MCF 10A (cell line): ENCODE measurements at regions of chr12 and their contacts with region 1.

Region 1: DNA sequence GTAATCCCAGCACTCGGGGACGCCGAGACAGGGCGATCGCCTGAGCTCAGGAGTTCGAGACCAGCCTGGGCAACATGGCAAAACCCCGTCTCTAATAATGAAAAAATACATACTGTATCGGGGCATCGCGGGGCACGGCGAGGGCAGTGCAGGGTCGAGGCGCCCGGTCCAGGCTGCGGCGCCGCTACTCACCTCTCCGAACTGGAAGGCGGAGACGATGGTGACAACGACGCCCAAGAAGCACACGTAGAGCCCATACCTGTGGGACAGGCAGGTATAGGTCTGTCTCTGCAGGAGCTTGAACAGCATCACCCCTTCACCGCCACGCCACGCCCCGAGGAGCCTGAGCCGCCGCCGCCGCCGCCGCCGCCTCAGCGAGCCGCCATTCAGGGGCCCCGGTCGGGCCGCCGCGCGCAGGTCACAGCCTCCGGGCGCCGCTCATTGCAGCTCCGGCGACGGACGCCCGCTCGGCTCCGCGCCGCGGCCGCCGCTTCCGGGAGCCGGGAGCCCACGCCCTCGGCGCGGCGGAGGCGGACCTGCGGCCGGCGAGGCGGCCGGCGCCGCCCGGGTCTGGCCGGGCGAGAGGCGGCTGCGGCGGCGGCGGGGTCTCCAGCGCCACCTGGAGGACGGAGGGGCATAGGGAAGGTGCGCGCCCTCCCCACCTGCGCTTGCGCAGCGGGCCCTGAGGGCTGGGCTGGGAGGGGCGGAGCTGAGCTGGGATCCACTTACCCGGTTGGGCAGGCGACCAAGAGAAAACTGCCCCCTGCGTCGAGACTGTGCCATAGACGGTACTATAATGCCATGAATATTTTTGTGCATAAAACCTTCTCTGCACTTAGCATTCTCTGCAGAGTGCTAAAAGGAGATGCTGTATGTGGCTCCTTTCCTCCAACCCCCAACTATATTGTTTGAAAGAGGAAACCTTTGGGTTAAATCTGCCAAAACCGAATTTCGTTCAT is at the start of gene GNPTAB:
- DNase-seq: peak; percentile 94
- H3K4me3 Mint-ChIP-seq: peak within 1 kb of the TSS; percentile 84
- H3K27ac Mint-ChIP-seq: peak within 1 kb of the TSS; percentile 70
- H3K4me1 Mint-ChIP-seq: peaks cover 11% of the 10 kb centered on the region
- H3K27me3 Mint-ChIP-seq: no peaks in the 10 kb centered on the region
- CTCF ChIP-seq: peak; percentile 65
- total RNA-seq, gene GNPTAB: 11.5 and 14.8 TPM in 2 replicates

Region 2: GRCh38 chr12:101298426-101298825 is 532.2 kb before region 1 on chr12:
- CTCF ChIA-PET with region 1: no interaction called
- POLR2A ChIA-PET with region 1: no interaction called
- intact Hi-C with region 1: no loop called
- DNase-seq: peak; percentile 68
- H3K4me3 Mint-ChIP-seq: no peak overlapping the region
- H3K27ac Mint-ChIP-seq: peak overlapping the region; percentile 11
- H3K4me1 Mint-ChIP-seq: peaks cover 8% of the 10 kb centered on the region
- H3K27me3 Mint-ChIP-seq: no peaks in the 10 kb centered on the region
- CTCF ChIP-seq: no peak

Region 3: GRCh38 chr12:101407436-101408345 is 423.0 kb before region 1 on chr12 and contains the start of gene ARL1:
- CTCF ChIA-PET with region 1: interaction called, 12 read pairs
- POLR2A ChIA-PET with region 1: interaction called, 20 read pairs
- intact Hi-C with region 1: no loop called
- DNase-seq: peak; percentile 85
- H3K4me3 Mint-ChIP-seq: peak within 1 kb of the TSS; percentile 85
- H3K27ac Mint-ChIP-seq: peak within 1 kb of the TSS; percentile 96
- H3K4me1 Mint-ChIP-seq: peaks cover 10% of the 10 kb centered on the region
- H3K27me3 Mint-ChIP-seq: no peaks in the 10 kb centered on the region
- CTCF ChIP-seq: no peak
- total RNA-seq, gene ARL1: 112 and 175 TPM in 2 replicates

Region 4: GRCh38 chr12:101414533-101415119 is 416.0 kb before region 1 on chr12:
- CTCF ChIA-PET with region 1: interaction called, 12 read pairs
- POLR2A ChIA-PET with region 1: no interaction called
- intact Hi-C with region 1: loop called (anchors 2 kb)
- DNase-seq: peak; percentile 77
- H3K4me3 Mint-ChIP-seq: no peak overlapping the region
- H3K27ac Mint-ChIP-seq: no peak overlapping the region
- H3K4me1 Mint-ChIP-seq: no peaks in the 10 kb centered on the region
- H3K27me3 Mint-ChIP-seq: no peaks in the 10 kb centered on the region
- CTCF ChIP-seq: peak; percentile 46

Region 5: DNA sequence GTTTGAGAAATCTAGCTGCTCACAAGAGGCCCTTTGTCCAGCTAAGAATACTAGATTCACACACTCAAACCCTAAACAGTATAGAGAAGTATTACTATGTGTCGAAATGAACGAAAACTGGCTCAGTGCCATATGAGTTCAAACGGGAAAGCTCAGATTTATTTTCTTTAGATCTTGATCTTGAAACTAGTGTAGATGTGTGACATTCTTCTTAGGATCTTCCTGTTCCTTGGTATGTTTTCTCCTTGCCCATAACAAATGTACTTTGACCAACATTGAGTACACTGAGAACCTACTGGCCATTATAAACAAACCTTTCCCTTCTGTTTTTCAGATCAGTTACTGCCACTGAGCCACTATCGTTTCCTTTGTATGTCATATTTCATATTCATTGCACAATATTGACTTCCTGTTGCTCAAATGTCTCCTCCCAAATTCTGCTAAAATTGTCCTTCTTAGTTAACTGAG is 214.6 kb before region 1 on chr12:
- CTCF ChIA-PET with region 1: no interaction called
- POLR2A ChIA-PET with region 1: no interaction called
- intact Hi-C with region 1: no loop called
- DNase-seq: peak; percentile 74
- H3K4me3 Mint-ChIP-seq: peak overlapping the region; percentile 41
- H3K27ac Mint-ChIP-seq: peak overlapping the region; percentile 55
- H3K4me1 Mint-ChIP-seq: peaks cover 31% of the 10 kb centered on the region
- H3K27me3 Mint-ChIP-seq: no peaks in the 10 kb centered on the region
- CTCF ChIP-seq: no peak

Region 6: DNA sequence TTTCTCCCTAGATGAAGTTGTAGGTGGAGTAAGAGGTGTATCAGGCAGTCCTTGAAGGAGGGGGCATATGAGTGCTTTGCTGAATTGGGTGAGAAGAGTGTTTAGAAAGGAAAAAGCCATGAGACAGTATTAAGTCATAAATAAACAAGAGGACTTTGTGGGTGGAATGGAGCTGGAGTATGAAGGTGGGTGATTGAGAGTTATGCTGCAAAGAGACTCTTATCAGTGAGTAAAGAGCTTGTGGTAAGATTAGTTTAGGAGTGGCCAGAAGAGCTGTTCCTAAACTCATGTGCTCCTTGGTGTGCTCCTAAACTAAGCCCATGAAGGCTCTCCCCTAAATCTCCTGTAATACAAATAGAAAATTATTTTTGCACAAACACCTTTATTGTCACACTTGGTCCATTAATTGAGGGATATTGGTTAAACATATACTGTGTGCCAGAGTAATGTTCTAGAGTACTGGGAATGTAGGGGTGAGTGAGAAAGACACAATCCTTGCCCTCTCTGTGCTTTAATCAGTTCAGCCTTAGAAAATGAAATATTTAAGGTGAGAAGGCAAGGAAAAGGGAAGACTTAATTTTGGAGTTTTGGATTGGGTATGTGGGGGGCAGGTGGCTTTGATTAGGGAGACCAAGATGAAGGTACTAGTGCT is 123.4 kb before region 1 on chr12:
- CTCF ChIA-PET with region 1: no interaction called
- POLR2A ChIA-PET with region 1: no interaction called
- intact Hi-C with region 1: no loop called
- DNase-seq: no peak
- H3K4me3 Mint-ChIP-seq: no peak overlapping the region
- H3K27ac Mint-ChIP-seq: peak overlapping the region; percentile 25
- H3K4me1 Mint-ChIP-seq: peaks cover 18% of the 10 kb centered on the region
- H3K27me3 Mint-ChIP-seq: no peaks in the 10 kb centered on the region
- CTCF ChIP-seq: no peak

Region 7: DNA sequence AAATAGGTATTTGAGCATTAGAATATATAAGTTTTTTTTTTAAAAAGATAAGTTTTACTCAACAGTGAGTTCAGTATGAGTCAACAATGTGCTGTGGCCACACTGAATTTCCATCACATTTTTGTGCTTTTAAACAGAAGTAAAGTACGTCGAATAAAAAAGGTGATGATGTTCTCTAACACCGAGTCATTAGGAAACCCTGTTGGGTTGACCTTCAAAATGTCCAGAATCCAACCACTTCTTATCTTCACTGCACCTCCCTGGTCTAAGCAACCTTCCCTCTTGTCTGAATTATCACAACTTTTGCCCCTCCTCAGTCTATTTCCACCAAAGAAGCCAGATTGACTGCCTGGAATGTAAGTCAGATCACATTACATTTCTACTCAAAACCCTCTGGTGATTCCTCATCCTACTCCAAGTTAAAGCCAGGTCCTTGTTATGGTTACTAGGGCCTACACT is 48.3 kb before region 1 on chr12:
- CTCF ChIA-PET with region 1: interaction called, 19 read pairs
- POLR2A ChIA-PET with region 1: interaction called, 5 read pairs
- intact Hi-C with region 1: no loop called
- DNase-seq: no peak
- H3K4me3 Mint-ChIP-seq: no peak overlapping the region
- H3K27ac Mint-ChIP-seq: no peak overlapping the region
- H3K4me1 Mint-ChIP-seq: no peaks in the 10 kb centered on the region
- H3K27me3 Mint-ChIP-seq: no peaks in the 10 kb centered on the region
- CTCF ChIP-seq: no peak

Region 8: GRCh38 chr12:101792051-101792931 is 38.4 kb before region 1 on chr12:
- CTCF ChIA-PET with region 1: interaction called, 61 read pairs
- POLR2A ChIA-PET with region 1: interaction called, 6 read pairs
- intact Hi-C with region 1: loop called (anchors 2 kb)
- DNase-seq: peak; percentile 4
- H3K4me3 Mint-ChIP-seq: no peak overlapping the region
- H3K27ac Mint-ChIP-seq: no peak overlapping the region
- H3K4me1 Mint-ChIP-seq: no peaks in the 10 kb centered on the region
- H3K27me3 Mint-ChIP-seq: no peaks in the 10 kb centered on the region
- CTCF ChIP-seq: no peak

Region 9: DNA sequence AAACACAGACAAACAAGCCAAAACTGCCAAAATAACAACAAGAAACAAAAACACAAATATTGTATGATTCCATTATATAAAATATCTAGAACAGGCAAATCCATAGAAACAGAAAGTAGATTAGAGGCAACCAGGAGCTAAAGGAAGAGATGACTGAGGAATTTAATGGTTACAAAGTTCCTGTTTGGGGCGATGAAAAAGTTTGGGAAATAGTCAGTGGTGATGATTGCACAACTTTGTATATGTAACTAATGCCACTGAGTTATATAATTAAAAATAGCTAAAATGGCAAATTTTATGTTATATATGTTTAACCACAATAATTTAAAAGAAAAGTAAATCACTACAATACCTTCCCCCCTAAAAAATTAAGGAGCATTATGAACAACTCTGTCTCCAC is 24.4 kb before region 1 on chr12:
- CTCF ChIA-PET with region 1: interaction called, 10 read pairs
- POLR2A ChIA-PET with region 1: interaction called, 3 read pairs
- intact Hi-C with region 1: no loop called
- DNase-seq: no peak
- H3K4me3 Mint-ChIP-seq: no peak overlapping the region
- H3K27ac Mint-ChIP-seq: no peak overlapping the region
- H3K4me1 Mint-ChIP-seq: no peaks in the 10 kb centered on the region
- H3K27me3 Mint-ChIP-seq: no peaks in the 10 kb centered on the region
- CTCF ChIP-seq: no peak

Region 10: DNA sequence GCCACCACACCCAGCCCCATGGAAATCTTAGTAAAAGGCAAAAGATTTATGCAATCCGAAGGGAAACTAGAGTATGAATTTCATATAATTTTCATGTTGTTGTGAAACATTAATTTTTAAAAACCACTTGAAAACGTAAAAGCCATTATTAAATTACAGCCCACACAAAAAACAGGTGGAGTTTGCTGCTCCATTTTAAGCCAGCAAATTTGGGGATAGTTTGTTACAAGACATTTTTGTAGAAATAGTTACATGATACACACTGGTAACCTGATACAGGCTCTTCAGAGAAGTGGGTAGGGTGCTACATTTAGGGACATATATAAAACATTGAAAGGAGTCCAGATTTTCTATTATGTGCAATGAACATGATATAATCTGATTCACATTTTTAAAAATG is 17.5 kb before region 1 on chr12:
- CTCF ChIA-PET with region 1: interaction called, 20 read pairs
- POLR2A ChIA-PET with region 1: interaction called, 9 read pairs
- intact Hi-C with region 1: no loop called
- DNase-seq: no peak
- H3K4me3 Mint-ChIP-seq: no peak overlapping the region
- H3K27ac Mint-ChIP-seq: no peak overlapping the region
- H3K4me1 Mint-ChIP-seq: no peaks in the 10 kb centered on the region
- H3K27me3 Mint-ChIP-seq: no peaks in the 10 kb centered on the region
- CTCF ChIP-seq: no peak